HCT116 (cell line): ENCODE measurements at regions of chr14 and their contacts with region 1.

Region 1: GRCh38 chr14:93173943-93174395 is 10.7 kb downstream of the MOAP1 start:
- DNase-seq: no peak
- ATAC-seq: no peak
- H3K4me3 ChIP-seq: no peak overlapping the region
- H3K27ac ChIP-seq: no peak overlapping the region
- H3K4me1 ChIP-seq: peaks cover 3 to 6% of the 10 kb centered on the region in 2 experiments; a peak in 2 of 4 replicates
- H3K27me3 ChIP-seq: no peaks in the 10 kb centered on the region
- CTCF ChIP-seq: no peak
- POLR2A ChIP-seq: no peak
- RAD21 ChIP-seq: no peak

Region 2: GRCh38 chr14:93184388-93185353 is 10.7 kb after region 1 on chr14 and contains the starts of genes LYSET and MOAP1:
- CTCF ChIA-PET with region 1: interaction called, 10 read pairs
- POLR2A ChIA-PET with region 1: interaction called, 5 read pairs
- RAD21 ChIA-PET with region 1: no interaction called
- intact Hi-C with region 1: no loop called
- DNase-seq: no peak
- ATAC-seq: peak; percentile 86
- H3K4me3 ChIP-seq: peak within 1 kb of the TSS; percentile 71 to 94
- H3K27ac ChIP-seq: peak within 1 kb of the TSS; percentile 94
- H3K4me1 ChIP-seq: peaks cover 2 to 16% of the 10 kb centered on the region in 2 experiments; a peak in 3 of 4 replicates
- H3K27me3 ChIP-seq: no peaks in the 10 kb centered on the region
- CTCF ChIP-seq: peak in 2 of 3 experiments; percentile 6 to 31; a peak in 2 of 6 replicates
- POLR2A ChIP-seq: peak; percentile 15
- RAD21 ChIP-seq: no peak
- total RNA-seq, gene LYSET: 19.5 TPM
- total RNA-seq, gene MOAP1: 14.2 TPM